HepG2 (cell line): ENCODE measurements at regions of chr14 and their contacts with region 1.

Region 1: DNA sequence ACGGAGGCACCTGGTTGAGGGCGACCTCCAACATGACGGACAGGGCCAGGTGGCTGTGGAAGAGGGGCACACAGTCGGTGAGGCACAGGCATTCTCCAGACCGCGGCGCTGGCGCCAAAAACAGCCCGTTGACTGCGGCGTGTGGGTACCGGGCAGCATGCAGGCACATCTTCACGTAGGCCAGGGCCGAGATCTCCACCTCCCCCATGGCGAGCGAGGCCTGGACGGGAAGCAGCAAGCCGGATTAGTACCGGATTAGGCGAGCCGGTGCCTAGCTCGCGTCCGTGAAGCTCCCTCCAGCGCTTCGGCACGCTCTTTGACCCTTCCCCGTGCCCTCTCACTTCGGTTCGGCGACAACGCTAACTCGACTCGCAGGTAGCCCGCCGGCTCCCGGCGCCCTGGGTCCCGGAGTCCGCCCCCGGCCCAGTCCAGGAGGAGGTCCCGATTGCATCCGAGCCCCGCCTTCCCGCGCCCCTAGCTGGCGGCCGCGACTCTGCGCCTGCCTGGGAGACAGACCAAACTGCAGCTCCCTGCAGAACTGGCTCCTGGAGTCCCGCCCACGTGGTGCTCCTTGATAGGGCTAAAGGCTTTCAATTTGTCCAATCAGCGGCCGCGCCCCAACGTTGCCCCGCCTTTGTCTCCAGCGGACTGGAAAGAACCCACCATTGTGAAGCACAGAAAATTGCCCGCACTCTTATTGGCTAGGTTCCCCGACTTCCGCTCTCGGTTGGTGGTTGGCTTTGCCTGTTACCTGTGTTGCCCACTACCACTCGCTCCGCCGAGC is at the start of gene EMC9:
- DNase-seq: peak; percentile 100
- ATAC-seq: peak; percentile 88
- H3K4me3 ChIP-seq: peak within 1 kb of the TSS; percentile 83 to 99 (median 95)
- H3K27ac ChIP-seq: peak within 1 kb of the TSS; percentile 86
- H3K4me1 ChIP-seq: peaks cover 77% of the 10 kb centered on the region
- H3K27me3 ChIP-seq: peaks cover 0 to 3% of the 10 kb centered on the region in 2 experiments; a peak in 1 of 5 replicates
- CTCF ChIP-seq: peak; percentile 53
- EP300 ChIP-seq: peak in 1 of 2 experiments; percentile 70; a peak in 2 of 4 replicates
- POLR2A ChIP-seq: peak in 1 of 2 experiments; percentile 88; a peak in 2 of 4 replicates
- RAD21 ChIP-seq: peak; percentile 84
- total RNA-seq, gene EMC9: 71.2 and 78.7 TPM in 2 replicates

Region 2: GRCh38 chr14:23301288-23301968 is 839.9 kb before region 1 on chr14:
- CTCF ChIA-PET with region 1: no interaction called
- POLR2A ChIA-PET with region 1: interaction called, 5 read pairs
- in situ Hi-C with region 1: loop called (anchors 25 kb)
- intact Hi-C with region 1: no loop called
- DNase-seq: peak; percentile 100
- ATAC-seq: peak; percentile 87
- H3K4me3 ChIP-seq: peak overlapping the region; percentile 67 to 88 (median 75)
- H3K27ac ChIP-seq: peak overlapping the region; percentile 91
- H3K4me1 ChIP-seq: peaks cover 57% of the 10 kb centered on the region
- H3K27me3 ChIP-seq: no peaks in the 10 kb centered on the region; a peak in 1 of 5 replicates
- CTCF ChIP-seq: peak; percentile 92
- EP300 ChIP-seq: peak in 1 of 2 experiments; percentile 54; a peak in 2 of 4 replicates
- POLR2A ChIP-seq: no peak
- RAD21 ChIP-seq: peak; percentile 87

Region 3: DNA sequence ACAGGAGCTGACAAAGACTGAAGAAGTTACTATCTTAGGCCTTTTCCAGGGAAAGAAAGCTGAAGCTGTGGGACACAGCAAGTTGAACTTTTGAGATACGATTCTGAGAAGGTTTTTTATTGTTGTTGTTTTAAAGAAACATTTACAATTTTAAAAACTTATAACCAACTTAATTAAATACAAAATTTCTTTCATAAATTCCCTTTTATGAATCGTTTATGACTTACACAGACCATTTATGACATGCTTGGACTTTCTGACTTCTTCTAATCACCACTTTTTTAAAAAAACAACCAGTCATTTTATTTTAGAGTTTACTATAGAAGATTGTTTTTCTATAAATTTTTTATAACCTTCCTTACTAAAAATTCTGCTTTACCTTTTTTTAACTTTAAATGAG is 436.4 kb before region 1 on chr14:
- CTCF ChIA-PET with region 1: no interaction called
- POLR2A ChIA-PET with region 1: no interaction called
- in situ Hi-C with region 1: no loop called
- intact Hi-C with region 1: no loop called
- DNase-seq: peak; percentile 44
- ATAC-seq: no peak
- H3K4me3 ChIP-seq: no peak overlapping the region
- H3K27ac ChIP-seq: no peak overlapping the region
- H3K4me1 ChIP-seq: peaks cover 3% of the 10 kb centered on the region
- H3K27me3 ChIP-seq: no peaks in the 10 kb centered on the region
- CTCF ChIP-seq: no peak
- EP300 ChIP-seq: no peak
- POLR2A ChIP-seq: no peak
- RAD21 ChIP-seq: no peak

Region 4: GRCh38 chr14:24108336-24108874 is 32.9 kb before region 1 on chr14:
- CTCF ChIA-PET with region 1: interaction called, 3 read pairs
- POLR2A ChIA-PET with region 1: interaction called, 977 read pairs
- in situ Hi-C with region 1: no loop called
- intact Hi-C with region 1: no loop called
- DNase-seq: no peak
- ATAC-seq: no peak
- H3K4me3 ChIP-seq: no peak overlapping the region
- H3K27ac ChIP-seq: no peak overlapping the region
- H3K4me1 ChIP-seq: peaks cover 60% of the 10 kb centered on the region
- H3K27me3 ChIP-seq: no peaks in the 10 kb centered on the region
- CTCF ChIP-seq: no peak
- EP300 ChIP-seq: no peak
- POLR2A ChIP-seq: no peak
- RAD21 ChIP-seq: no peak

Region 5: GRCh38 chr14:24130717-24131548 is 10.4 kb before region 1 on chr14:
- CTCF ChIA-PET with region 1: no interaction called
- POLR2A ChIA-PET with region 1: interaction called, 977 read pairs
- in situ Hi-C with region 1: no loop called
- intact Hi-C with region 1: no loop called
- DNase-seq: peak; percentile 81
- ATAC-seq: peak; percentile 55
- H3K4me3 ChIP-seq: peak overlapping the region in 1 of 3 experiments; percentile 2; a peak in 1 of 6 replicates
- H3K27ac ChIP-seq: peak overlapping the region; percentile 48
- H3K4me1 ChIP-seq: peaks cover 52% of the 10 kb centered on the region
- H3K27me3 ChIP-seq: no peaks in the 10 kb centered on the region; a peak in 1 of 5 replicates
- CTCF ChIP-seq: no peak
- EP300 ChIP-seq: peak in 1 of 2 experiments; percentile 36; a peak in 1 of 4 replicates
- POLR2A ChIP-seq: no peak
- RAD21 ChIP-seq: no peak

Region 6: GRCh38 chr14:24188251-24189058 is 47.2 kb after region 1 on chr14 and contains the start of gene IPO4:
- CTCF ChIA-PET with region 1: no interaction called
- POLR2A ChIA-PET with region 1: interaction called, 41 read pairs
- in situ Hi-C with region 1: no loop called
- intact Hi-C with region 1: loop called (anchors 1 kb)
- DNase-seq: peak; percentile 100
- ATAC-seq: peak; percentile 88
- H3K4me3 ChIP-seq: peak within 1 kb of the TSS; percentile 70 to 92 (median 77)
- H3K27ac ChIP-seq: peak within 1 kb of the TSS; percentile 64
- H3K4me1 ChIP-seq: peaks cover 42% of the 10 kb centered on the region
- H3K27me3 ChIP-seq: no peaks in the 10 kb centered on the region
- CTCF ChIP-seq: peak; percentile 49
- EP300 ChIP-seq: peak; percentile 85 to 87; a peak in 3 of 4 replicates
- POLR2A ChIP-seq: peak in 1 of 2 experiments; percentile 98; a peak in 2 of 4 replicates
- RAD21 ChIP-seq: peak; percentile 77
- total RNA-seq, gene IPO4: 149 and 179 TPM in 2 replicates

Region 7: GRCh38 chr14:24195191-24196070 is 54.1 kb after region 1 on chr14 and contains the start of gene TM9SF1:
- CTCF ChIA-PET with region 1: no interaction called
- POLR2A ChIA-PET with region 1: interaction called, 38 read pairs
- in situ Hi-C with region 1: no loop called
- intact Hi-C with region 1: no loop called
- DNase-seq: peak; percentile 93
- ATAC-seq: peak; percentile 94
- H3K4me3 ChIP-seq: peak within 1 kb of the TSS; percentile 79 to 91 (median 85)
- H3K27ac ChIP-seq: peak within 1 kb of the TSS; percentile 84
- H3K4me1 ChIP-seq: peaks cover 65% of the 10 kb centered on the region
- H3K27me3 ChIP-seq: no peaks in the 10 kb centered on the region; a peak in 1 of 5 replicates
- CTCF ChIP-seq: peak; percentile 54
- EP300 ChIP-seq: peak; percentile 7 to 39; a peak in 1 of 4 replicates
- POLR2A ChIP-seq: peak in 1 of 2 experiments; percentile 81; a peak in 2 of 4 replicates
- RAD21 ChIP-seq: peak; percentile 52
- total RNA-seq, gene TM9SF1: 56.4 and 110 TPM in 2 replicates